ENCODE measurements at regions of chr2 and their contacts with region 1.

Region 1: GRCh38 chr2:204152616-204153015 is 216.1 kb downstream of the ICOS start:
- DNase-seq: no peak

Region 2: GRCh38 chr2:203097735-203098134 is 1054.9 kb before region 1 on chr2:
- intact Hi-C with region 1: loop called in 1 of 2 experiments (anchors 10 kb)
- DNase-seq: no peak

Region 3: GRCh38 chr2:203782262-203782976 is 370.2 kb before region 1 on chr2:
- intact Hi-C with region 1: no loop called
- DNase-seq: no peak

Region 4: DNA sequence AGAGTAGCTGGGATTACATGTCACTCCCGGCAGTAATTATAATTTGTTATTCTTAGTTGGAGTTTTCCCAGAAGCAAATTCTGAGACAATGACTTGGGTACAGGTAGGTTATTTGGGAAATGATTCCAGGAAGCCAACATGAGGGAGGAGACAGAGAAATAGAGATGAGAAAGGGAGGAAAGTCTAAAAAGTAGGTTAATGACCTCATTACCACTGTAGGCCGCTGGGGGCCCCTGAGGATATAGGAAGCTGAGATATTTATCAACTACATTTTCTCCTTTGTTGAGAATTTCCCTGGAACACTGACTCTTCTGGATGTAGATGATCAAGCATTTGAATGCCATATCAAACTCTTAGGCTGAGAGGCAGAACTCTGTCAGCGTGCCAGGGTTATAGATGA is 68.3 kb after region 1 on chr2:
- intact Hi-C with region 1: no loop called
- DNase-seq: no peak

Region 5: DNA sequence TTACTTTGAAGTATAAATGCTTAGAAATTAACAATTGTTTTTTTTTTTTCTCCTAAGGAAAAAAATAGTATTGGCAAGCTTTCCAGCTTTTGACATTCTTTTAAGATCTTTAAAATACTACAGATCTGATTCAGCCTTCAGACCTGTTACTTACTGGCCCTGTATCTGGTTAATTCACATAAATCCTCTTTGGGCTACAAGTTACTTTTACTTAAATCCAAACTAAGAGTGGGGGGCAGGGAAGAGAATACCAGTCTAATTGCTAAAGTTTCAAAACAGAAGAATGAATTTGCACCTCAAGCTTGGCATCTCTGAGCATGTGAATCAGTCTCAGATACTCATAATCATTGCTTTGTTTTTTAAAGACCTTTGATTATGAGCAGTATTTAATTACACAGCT is 778.9 kb after region 1 on chr2:
- intact Hi-C with region 1: loop called in 1 of 2 experiments (anchors 5 kb)
- DNase-seq: no peak

Measured in posterior vena cava (tissue), 2 donors.